Sigmoid colon (tissue), 7 donors: ENCODE measurements at regions of chr17 and their contacts with region 1.

Region 1: DNA sequence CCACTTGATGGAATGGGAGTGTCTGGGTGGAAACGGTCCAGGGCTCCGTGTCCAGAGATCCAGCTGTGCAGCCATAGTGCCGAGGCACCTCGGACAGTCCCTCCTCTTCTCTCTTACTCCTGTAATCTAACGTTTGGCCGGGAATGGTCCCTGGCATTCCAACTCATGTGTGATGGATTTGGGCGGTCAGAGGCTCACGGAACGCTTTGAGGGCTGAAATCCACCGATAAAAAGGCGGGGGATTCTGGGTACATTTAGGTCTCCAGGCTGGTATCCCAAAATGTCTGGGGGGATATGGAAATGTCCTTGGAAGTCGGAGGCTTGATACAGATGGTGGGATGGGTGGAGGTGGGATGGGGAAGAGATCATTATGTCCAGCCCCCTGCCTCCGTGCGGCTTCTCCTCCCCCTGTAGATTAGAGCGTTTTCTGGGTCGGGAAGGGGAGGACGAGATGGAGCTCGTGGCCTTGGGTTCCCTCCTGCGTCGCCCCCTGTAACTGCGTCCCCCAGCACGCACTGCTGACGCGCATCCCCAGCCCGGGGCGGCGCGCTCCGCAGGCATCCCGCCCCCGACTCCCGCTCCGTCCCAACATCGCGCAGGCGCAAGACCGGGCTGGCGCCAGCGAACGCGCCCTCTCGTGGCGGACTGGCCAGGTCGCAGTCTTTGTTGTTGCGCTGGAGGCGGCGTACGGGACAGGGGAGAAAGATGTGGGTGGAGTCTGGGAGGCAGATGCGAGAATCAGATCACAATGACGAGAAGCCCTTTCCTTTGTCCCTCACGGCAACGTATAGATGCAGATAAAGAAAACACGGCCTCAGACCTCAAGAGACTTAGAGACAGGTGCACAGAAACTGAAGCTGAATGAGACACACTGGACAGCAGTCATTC is 4.5 kb upstream of the SGCA start:
- DNase-seq: peak; percentile 96
- H3K4me3 ChIP-seq: peak overlapping the region; percentile 48 to 61 (median 52)
- H3K27ac ChIP-seq: peak overlapping the region; percentile 73 to 80 (median 77)
- H3K4me1 ChIP-seq: peaks cover 2 to 37% (median 27%) of the 10 kb centered on the region in 4 donors
- H3K27me3 ChIP-seq: no peaks in the 10 kb centered on the region
- CTCF ChIP-seq: peak; percentile 84 to 98 (median 90)
- EP300 ChIP-seq: no peak
- POLR2A ChIP-seq: peak in 1 of 2 donors; percentile 44

Region 2: GRCh38 chr17:50114849-50115357 is 46.4 kb before region 1 on chr17:
- intact Hi-C with region 1: loop called (anchors 5 kb)
- DNase-seq: no peak
- H3K4me3 ChIP-seq: no peak overlapping the region
- H3K27ac ChIP-seq: no peak overlapping the region
- H3K4me1 ChIP-seq: peaks cover 0 to 51% (median 43%) of the 10 kb centered on the region in 4 donors
- H3K27me3 ChIP-seq: no peaks in the 10 kb centered on the region
- CTCF ChIP-seq: peak in 1 of 4 experiments; percentile 19
- EP300 ChIP-seq: no peak
- POLR2A ChIP-seq: no peak

Region 3: GRCh38 chr17:50139950-50140871 is 21.1 kb before region 1 on chr17:
- intact Hi-C with region 1: loop called (anchors 2 kb)
- DNase-seq: peak; percentile 91
- H3K4me3 ChIP-seq: no peak overlapping the region
- H3K27ac ChIP-seq: peak overlapping the region; percentile 4 to 55 (median 24)
- H3K4me1 ChIP-seq: peaks cover 0 to 8% (median 4%) of the 10 kb centered on the region in 4 donors
- H3K27me3 ChIP-seq: no peaks in the 10 kb centered on the region
- CTCF ChIP-seq: peak; percentile 89 to 98 (median 97)
- EP300 ChIP-seq: no peak
- POLR2A ChIP-seq: no peak

Region 4: GRCh38 chr17:50213026-50214022 is 52.1 kb after region 1 on chr17:
- intact Hi-C with region 1: no loop called
- DNase-seq: no peak
- H3K4me3 ChIP-seq: no peak overlapping the region
- H3K27ac ChIP-seq: peak overlapping the region; percentile 89 to 99 (median 96)
- H3K4me1 ChIP-seq: peaks cover 0 to 69% (median 60%) of the 10 kb centered on the region in 4 donors
- H3K27me3 ChIP-seq: no peaks in the 10 kb centered on the region
- CTCF ChIP-seq: no peak
- EP300 ChIP-seq: no peak
- POLR2A ChIP-seq: no peak